ENCODE measurements at regions of chr20 and their contacts with region 1.

Region 1: GRCh38 chr20:49132995-49133478 is 55.1 kb downstream of the STAU1 start:
- DNase-seq: peak; percentile 50
- H3K4me3 ChIP-seq: no peak overlapping the region
- H3K27ac ChIP-seq: peak overlapping the region; percentile 47
- H3K27me3 ChIP-seq: no peaks in the 10 kb centered on the region
- CTCF ChIP-seq: peak; percentile 55

Region 2: DNA sequence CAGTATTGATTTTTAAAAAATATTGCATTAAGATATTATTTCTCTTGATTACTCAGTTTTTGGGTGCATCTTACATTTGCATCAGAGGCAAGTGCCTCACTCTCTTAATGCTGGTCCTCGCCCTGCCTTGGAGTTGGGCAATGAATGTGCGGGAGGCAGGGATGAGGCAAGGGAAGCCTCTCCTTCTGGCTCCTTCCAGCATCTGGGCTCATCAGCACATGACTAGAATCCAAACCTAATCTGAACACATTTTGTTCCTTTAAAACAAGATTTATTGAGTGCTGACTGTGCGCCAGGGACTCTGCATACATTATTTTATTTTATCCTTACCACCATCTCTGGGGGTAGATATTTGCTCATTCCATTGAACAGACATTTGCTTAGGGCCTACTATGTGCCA is 216.7 kb after region 1 on chr20:
- CTCF ChIA-PET with region 1: no interaction called
- POLR2A ChIA-PET with region 1: no interaction called
- DNase-seq: no peak
- H3K4me3 ChIP-seq: no peak overlapping the region
- H3K27ac ChIP-seq: no peak overlapping the region
- H3K27me3 ChIP-seq: peaks cover 31% of the 10 kb centered on the region
- CTCF ChIP-seq: no peak

Region 3: DNA sequence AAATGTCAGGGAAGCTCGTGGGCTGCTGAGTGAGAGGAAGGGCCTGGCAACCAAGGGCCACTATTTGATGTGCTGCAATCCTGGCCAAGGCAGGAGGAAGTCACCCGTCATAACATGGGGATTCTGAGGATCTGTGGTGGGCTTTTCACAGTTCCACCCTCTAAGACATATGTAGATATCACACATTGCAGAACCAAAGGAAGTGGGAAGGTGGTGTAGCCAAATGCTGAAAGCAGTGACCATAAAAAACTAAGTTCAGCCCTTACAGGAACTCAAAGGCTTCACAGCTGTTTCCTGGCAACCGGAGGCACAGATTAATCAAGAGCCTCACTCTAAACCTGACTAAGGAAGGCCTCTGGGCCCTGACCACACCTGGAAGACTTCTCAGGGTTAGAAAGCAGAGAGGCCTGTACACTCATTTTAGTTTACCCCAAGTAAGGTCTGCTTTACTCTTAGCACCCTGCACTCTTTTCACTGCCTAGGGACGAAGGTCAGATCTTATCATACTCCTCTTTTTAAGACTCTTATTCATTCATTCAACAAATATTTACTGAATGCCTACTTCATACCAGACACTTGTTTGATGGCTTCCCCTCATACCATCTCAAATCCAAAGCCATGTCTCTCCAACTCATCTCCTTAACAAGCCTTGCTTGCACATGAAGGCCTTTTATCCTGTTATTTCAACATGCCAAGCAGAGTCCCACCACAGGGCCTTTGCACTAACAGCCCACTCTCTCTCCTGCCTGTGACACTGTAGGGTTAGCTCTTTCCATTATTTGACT is 977.3 kb after region 1 on chr20:
- CTCF ChIA-PET with region 1: interaction called, 10 read pairs
- POLR2A ChIA-PET with region 1: no interaction called
- DNase-seq: no peak
- H3K4me3 ChIP-seq: peak overlapping the region; percentile 92; the same call in 1 of the 2 replicates
- H3K27ac ChIP-seq: no peak overlapping the region
- H3K27me3 ChIP-seq: no peaks in the 10 kb centered on the region
- CTCF ChIP-seq: no peak

Measured in AG04450 (cell line).